ENCODE measurements at regions of chr5 and their contacts with region 1.

Region 1: DNA sequence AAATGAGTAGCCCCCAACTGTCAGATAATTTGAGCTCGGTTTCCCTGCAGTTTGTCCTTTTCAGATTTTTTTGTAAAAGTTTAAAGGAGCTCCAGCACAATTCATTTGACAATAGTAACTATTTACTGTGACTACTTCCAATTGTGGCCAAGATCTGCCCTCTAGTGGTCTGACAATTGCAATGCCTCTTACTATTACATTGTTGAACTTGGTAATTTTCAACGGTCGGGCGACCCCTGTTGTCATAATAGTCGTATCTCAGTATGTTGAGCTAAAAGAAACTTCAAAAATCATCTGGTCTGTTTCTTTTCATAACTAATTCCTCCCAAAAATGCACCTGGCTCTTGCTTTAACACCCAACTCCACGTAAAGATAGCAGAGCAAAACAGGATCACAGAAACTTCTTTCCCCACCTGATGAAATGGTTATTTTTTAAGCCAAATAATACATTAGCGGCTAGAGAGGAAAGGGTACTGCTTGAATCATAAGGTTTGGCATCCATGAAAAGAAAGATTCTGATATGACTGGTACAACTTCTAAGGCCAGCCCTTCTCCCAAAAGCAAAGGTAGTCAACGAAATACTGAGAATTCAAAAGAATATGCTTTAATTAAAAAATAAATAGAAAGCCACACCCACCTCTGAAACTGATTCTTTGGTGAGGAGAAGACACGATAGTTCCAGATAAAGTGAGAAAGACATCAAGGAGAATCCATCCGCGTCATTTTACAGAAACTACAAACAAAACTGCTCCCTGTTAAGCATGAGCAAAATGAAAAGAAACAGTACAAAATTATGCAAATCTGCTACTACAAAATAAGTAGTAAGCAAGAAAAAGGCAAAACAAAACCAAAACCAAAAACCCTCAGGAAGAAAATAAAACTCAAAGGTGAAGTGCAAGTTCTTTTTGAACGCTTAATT is 76.9 kb upstream of the HTR4 start:
- DNase-seq: peak; percentile 83
- ATAC-seq: peak; percentile 86
- H3K4me3 ChIP-seq: peak overlapping the region; percentile 16 to 45
- H3K27ac ChIP-seq: no peak overlapping the region
- H3K4me1 ChIP-seq: peaks cover 0 to 9% of the 10 kb centered on the region in 2 experiments; a peak in 2 of 4 replicates
- H3K27me3 ChIP-seq: peaks cover 9% of the 10 kb centered on the region; the same call in 1 of the 2 replicates
- CTCF ChIP-seq: peak; percentile 68 to 99 (median 95)
- POLR2A ChIP-seq: no peak
- RAD21 ChIP-seq: peak; percentile 97

Region 2: DNA sequence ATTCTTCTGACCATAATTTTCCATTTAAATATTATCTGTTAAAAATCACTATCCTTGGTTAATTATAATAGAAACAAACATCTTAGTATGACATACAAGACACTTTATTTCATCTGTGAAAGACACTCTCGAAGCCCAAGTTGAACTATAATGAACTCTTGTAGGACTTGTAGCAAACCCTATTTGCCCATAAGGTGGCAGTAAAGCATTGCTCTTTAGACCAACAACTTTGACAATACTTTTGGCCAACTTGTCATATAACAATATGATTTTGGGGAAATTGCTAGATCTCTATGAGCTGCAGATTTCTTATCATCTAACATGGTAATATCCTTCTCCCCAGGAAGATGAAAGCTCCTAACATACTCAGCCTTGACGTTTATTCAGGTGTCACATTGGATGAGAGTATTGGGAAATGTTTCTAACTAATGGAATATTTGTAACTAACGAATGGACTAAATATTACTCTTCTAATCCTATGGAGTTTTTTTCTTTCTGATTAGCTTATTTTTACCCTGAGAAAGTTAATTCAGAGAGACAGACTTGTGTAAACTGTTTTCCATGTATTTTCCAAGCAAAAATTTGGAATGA is 551.9 kb before region 1 on chr5:
- CTCF ChIA-PET with region 1: interaction called, 29 read pairs
- POLR2A ChIA-PET with region 1: no interaction called
- RAD21 ChIA-PET with region 1: no interaction called
- intact Hi-C with region 1: loop called (anchors 1 kb)
- DNase-seq: peak; percentile 48
- ATAC-seq: peak; percentile 78
- H3K4me3 ChIP-seq: no peak overlapping the region
- H3K27ac ChIP-seq: no peak overlapping the region
- H3K4me1 ChIP-seq: no peaks in the 10 kb centered on the region
- H3K27me3 ChIP-seq: no peaks in the 10 kb centered on the region
- CTCF ChIP-seq: peak; percentile 62 to 76 (median 72)
- POLR2A ChIP-seq: no peak
- RAD21 ChIP-seq: peak; percentile 84

Region 3: DNA sequence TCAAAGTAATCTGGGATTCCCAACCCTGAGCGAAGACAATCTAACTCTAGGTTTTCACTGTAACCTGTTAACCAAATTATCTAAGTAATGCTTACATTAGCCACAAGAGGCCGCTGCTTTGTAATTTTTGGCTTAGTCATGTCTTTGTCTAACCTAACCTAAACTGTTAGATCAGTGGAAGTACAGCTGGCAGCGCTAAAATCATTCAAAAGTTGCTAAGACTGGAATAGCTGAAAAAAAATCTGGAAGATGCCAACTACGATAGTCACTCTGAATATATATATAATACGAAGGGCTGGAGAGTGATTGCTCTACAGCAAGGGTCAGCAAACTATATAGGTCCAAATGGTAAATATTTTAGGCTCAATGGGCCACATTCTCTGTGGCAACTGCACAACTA is 287.2 kb before region 1 on chr5:
- CTCF ChIA-PET with region 1: interaction called, 91 read pairs
- POLR2A ChIA-PET with region 1: no interaction called
- RAD21 ChIA-PET with region 1: interaction called in 1 of 2 experiments, 3 read pairs
- intact Hi-C with region 1: loop called (anchors 1 kb)
- DNase-seq: peak; percentile 45
- ATAC-seq: peak; percentile 86
- H3K4me3 ChIP-seq: no peak overlapping the region
- H3K27ac ChIP-seq: no peak overlapping the region
- H3K4me1 ChIP-seq: no peaks in the 10 kb centered on the region
- H3K27me3 ChIP-seq: peaks cover 5% of the 10 kb centered on the region
- CTCF ChIP-seq: peak; percentile 52 to 82 (median 78)
- POLR2A ChIP-seq: no peak
- RAD21 ChIP-seq: peak; percentile 77

Region 4: GRCh38 chr5:148912714-148913398 is 181.7 kb after region 1 on chr5:
- CTCF ChIA-PET with region 1: interaction called, 4 read pairs
- POLR2A ChIA-PET with region 1: no interaction called
- RAD21 ChIA-PET with region 1: no interaction called
- intact Hi-C with region 1: loop called (anchors 5 kb)
- DNase-seq: peak; percentile 54
- ATAC-seq: peak; percentile 75
- H3K4me3 ChIP-seq: peak overlapping the region in 1 of 2 experiments; percentile 36; a peak in 1 of 4 replicates
- H3K27ac ChIP-seq: peak overlapping the region; percentile 19; the same call in 1 of the 2 replicates
- H3K4me1 ChIP-seq: peaks cover 21 to 65% of the 10 kb centered on the region in 2 experiments
- H3K27me3 ChIP-seq: no peaks in the 10 kb centered on the region
- CTCF ChIP-seq: peak; percentile 52 to 67 (median 58); a peak in 5 of 6 replicates
- POLR2A ChIP-seq: no peak
- RAD21 ChIP-seq: peak; percentile 82

Region 5: GRCh38 chr5:149007174-149007573 is 276.0 kb after region 1 on chr5:
- CTCF ChIA-PET with region 1: interaction called, 10 read pairs
- POLR2A ChIA-PET with region 1: no interaction called
- RAD21 ChIA-PET with region 1: no interaction called
- intact Hi-C with region 1: no loop called
- DNase-seq: no peak
- ATAC-seq: no peak
- H3K4me3 ChIP-seq: no peak overlapping the region
- H3K27ac ChIP-seq: no peak overlapping the region
- H3K4me1 ChIP-seq: peaks cover 3 to 24% of the 10 kb centered on the region in 2 experiments
- H3K27me3 ChIP-seq: no peaks in the 10 kb centered on the region
- CTCF ChIP-seq: no peak
- POLR2A ChIP-seq: no peak
- RAD21 ChIP-seq: no peak

Region 6: DNA sequence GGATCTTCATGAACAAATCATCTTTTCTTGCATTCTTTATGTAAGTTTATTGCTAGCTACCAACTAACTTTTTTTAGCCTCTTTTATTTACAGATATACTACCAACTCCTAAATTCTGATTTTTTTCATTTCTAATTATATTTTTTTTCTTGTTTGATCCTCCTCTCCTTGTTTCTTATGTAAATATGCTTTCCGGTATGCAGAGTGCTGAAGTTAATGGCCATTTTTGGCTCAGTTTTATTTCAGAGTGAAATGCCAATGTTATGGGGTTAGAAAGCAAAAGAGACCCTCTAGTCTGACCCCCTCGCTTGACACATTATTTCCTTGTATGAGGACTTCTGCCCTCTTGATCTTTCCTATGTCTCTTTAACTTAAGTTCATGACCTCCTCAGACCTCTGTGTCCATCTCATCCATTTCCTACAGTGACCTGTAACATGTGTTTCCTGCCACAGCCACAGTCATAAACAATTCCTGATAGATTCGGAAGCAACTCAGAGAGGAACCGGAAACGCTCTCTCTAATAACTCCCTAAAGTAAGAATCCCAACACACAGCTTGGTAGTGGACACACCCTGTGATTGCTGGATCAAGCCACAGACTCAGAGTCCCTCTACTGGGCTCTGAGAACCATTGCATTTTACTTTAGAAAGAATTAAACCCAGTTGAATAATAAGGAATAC is 497.6 kb after region 1 on chr5:
- CTCF ChIA-PET with region 1: interaction called, 3 read pairs
- POLR2A ChIA-PET with region 1: no interaction called
- RAD21 ChIA-PET with region 1: no interaction called
- intact Hi-C with region 1: loop called (anchors 5 kb)
- DNase-seq: peak; percentile 89
- ATAC-seq: peak; percentile 98
- H3K4me3 ChIP-seq: no peak overlapping the region
- H3K27ac ChIP-seq: no peak overlapping the region
- H3K4me1 ChIP-seq: peaks cover 21 to 31% of the 10 kb centered on the region in 2 experiments
- H3K27me3 ChIP-seq: no peaks in the 10 kb centered on the region
- CTCF ChIP-seq: peak; percentile 72 to 97 (median 93)
- POLR2A ChIP-seq: no peak
- RAD21 ChIP-seq: peak; percentile 100

Measured in HCT116 (cell line).